HEK293 (cell line): ENCODE measurements at regions of chr5 and their contacts with region 1.

Region 1: GRCh38 chr5:148730943-148731861 is 76.9 kb upstream of the HTR4 start:
- H3K4me3 ChIP-seq: no peak overlapping the region
- H3K27ac ChIP-seq: no peak overlapping the region
- H3K4me1 ChIP-seq: peaks cover 10% of the 10 kb centered on the region; the same call in 1 of the 2 replicates
- CTCF ChIP-seq: peak; percentile 82

Region 2: DNA sequence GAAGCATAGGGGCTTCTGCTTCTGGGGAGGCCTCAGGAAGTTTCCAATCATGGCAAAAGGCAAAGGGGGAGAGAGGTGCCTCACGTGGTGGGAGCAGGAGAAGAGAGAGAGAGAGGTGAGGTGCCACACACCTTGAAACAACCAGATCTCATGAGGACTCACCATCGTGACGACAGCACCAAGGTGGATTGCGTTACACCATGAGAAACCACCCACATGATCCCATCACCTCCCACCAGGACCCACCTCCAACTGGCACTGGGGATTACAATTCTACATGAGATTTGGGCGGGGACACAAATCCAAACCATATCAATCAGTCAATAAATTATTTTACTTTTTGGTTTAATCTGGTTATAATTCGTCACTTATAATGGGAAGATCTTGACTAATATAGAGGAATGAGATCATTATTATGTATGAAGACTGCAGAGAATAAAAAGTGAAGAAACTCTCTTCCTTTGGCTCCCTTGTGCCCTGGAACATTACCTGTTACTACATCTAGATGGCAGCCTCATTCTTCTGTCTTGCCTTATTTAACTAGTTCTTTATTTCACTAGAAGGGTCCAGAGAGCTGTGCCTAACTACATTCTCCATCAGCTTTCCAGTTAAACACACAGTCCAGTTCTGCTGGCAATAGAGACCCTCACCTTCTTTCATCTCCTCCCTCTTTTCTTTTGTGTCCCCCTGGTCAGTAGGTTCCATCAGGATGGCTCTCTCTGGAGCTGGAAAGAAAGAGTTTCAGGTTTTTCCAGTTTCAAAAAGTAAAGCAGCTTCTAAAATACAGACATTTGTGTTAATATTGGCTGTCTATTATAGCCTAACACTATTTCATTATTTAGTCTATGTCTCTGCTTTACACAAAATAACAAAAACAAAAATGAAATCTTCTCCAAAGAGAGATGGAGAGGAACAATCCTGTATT is 440.7 kb before region 1 on chr5:
- CTCF ChIA-PET with region 1: interaction called, 29 read pairs
- POLR2A ChIA-PET with region 1: no interaction called
- H3K4me3 ChIP-seq: no peak overlapping the region
- H3K27ac ChIP-seq: no peak overlapping the region
- H3K4me1 ChIP-seq: no peaks in the 10 kb centered on the region
- CTCF ChIP-seq: no peak

Region 3: DNA sequence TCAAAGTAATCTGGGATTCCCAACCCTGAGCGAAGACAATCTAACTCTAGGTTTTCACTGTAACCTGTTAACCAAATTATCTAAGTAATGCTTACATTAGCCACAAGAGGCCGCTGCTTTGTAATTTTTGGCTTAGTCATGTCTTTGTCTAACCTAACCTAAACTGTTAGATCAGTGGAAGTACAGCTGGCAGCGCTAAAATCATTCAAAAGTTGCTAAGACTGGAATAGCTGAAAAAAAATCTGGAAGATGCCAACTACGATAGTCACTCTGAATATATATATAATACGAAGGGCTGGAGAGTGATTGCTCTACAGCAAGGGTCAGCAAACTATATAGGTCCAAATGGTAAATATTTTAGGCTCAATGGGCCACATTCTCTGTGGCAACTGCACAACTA is 287.2 kb before region 1 on chr5:
- CTCF ChIA-PET with region 1: interaction called, 277 read pairs
- POLR2A ChIA-PET with region 1: interaction called, 5 read pairs
- H3K4me3 ChIP-seq: no peak overlapping the region
- H3K27ac ChIP-seq: no peak overlapping the region
- H3K4me1 ChIP-seq: no peaks in the 10 kb centered on the region
- CTCF ChIP-seq: 0 out of 2 replicates have a peak, but pooled peaks have one; percentile 9

Region 4: GRCh38 chr5:148607406-148607805 is 123.8 kb before region 1 on chr5:
- CTCF ChIA-PET with region 1: no interaction called
- POLR2A ChIA-PET with region 1: no interaction called
- H3K4me3 ChIP-seq: no peak overlapping the region
- H3K27ac ChIP-seq: no peak overlapping the region
- H3K4me1 ChIP-seq: no peaks in the 10 kb centered on the region
- CTCF ChIP-seq: no peak

Region 5: GRCh38 chr5:148713735-148714508 is 17.3 kb before region 1 on chr5:
- CTCF ChIA-PET with region 1: interaction called, 11 read pairs
- POLR2A ChIA-PET with region 1: no interaction called
- H3K4me3 ChIP-seq: no peak overlapping the region
- H3K27ac ChIP-seq: no peak overlapping the region
- H3K4me1 ChIP-seq: no peaks in the 10 kb centered on the region
- CTCF ChIP-seq: no peak

Region 6: GRCh38 chr5:148957591-148958202 is 226.5 kb after region 1 on chr5:
- CTCF ChIA-PET with region 1: interaction called, 64 read pairs
- POLR2A ChIA-PET with region 1: no interaction called
- H3K4me3 ChIP-seq: no peak overlapping the region
- H3K27ac ChIP-seq: no peak overlapping the region
- H3K4me1 ChIP-seq: no peaks in the 10 kb centered on the region
- CTCF ChIP-seq: peak; percentile 64; the same call in 1 of the 2 replicates

Region 7: DNA sequence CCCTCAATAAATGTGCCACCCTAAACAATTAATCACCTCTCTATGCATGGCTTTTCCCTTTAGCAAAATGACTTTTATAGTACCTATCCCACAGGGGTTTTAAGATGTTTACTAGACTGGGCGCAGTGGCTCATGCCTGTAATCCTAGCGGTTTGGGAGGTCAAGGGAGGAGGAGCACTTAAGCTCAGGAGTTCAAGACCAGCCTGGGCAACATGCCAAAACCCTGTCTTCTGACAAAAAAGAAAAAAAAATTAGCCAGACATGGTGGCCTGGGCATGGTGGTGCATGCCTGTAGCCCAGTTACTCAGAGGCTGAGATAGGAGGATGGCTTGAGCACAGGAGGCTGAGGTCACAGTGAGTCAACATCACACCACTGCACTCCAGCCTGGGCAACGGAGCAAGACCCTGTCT is 318.2 kb after region 1 on chr5:
- CTCF ChIA-PET with region 1: interaction called, 18 read pairs
- POLR2A ChIA-PET with region 1: no interaction called
- H3K4me3 ChIP-seq: no peak overlapping the region
- H3K27ac ChIP-seq: no peak overlapping the region
- H3K4me1 ChIP-seq: no peaks in the 10 kb centered on the region
- CTCF ChIP-seq: no peak